Activated CD4-positive, alpha-beta T cell treated with anti-CD3 and anti-CD28 coated beads for 36 hours (primary cell): ENCODE measurements at regions of chr19 and their contacts with region 1.

Region 1: GRCh38 chr19:15418588-15419412 is at the start of gene AKAP8L:
- DNase-seq: peak; percentile 99
- ATAC-seq: peak; percentile 98
- H3K4me3 Mint-ChIP-seq: peak within 1 kb of the TSS; percentile 98
- H3K27ac Mint-ChIP-seq: peak within 1 kb of the TSS; percentile 98
- H3K4me1 Mint-ChIP-seq: peaks cover 37% of the 10 kb centered on the region
- H3K27me3 Mint-ChIP-seq: no peaks in the 10 kb centered on the region
- total RNA-seq, gene AKAP8L: 76.2 to 89.9 TPM

Region 2: DNA sequence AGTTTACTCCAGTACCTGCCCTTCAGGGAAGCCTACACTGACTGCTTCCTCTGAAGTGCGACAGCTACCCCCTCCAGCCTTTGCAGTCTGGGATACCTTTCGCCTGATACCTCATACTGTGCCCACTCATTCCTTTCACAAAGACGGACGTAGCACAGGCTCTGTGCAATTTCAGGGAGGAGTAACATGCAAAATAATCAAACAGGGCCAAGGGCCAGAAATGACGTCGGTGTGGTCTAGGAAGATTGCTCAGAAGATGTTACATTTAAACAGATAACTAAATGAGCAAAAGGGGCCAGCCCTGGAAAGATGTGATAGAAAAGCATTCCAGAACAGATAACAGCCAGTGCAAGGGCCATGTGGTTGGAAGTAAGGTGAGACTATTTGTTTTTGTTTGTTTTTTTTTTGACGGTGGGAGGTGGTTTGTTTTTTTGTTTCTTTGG is 993.1 kb before region 1 on chr19:
- CTCF ChIA-PET with region 1: no interaction called
- POLR2A ChIA-PET with region 1: no interaction called
- intact Hi-C with region 1: no loop called
- DNase-seq: no peak
- ATAC-seq: no peak
- H3K4me3 Mint-ChIP-seq: no peak overlapping the region
- H3K27ac Mint-ChIP-seq: no peak overlapping the region
- H3K4me1 Mint-ChIP-seq: no peaks in the 10 kb centered on the region
- H3K27me3 Mint-ChIP-seq: no peaks in the 10 kb centered on the region

Region 3: GRCh38 chr19:15161028-15161989 is 257.5 kb before region 1 on chr19:
- CTCF ChIA-PET with region 1: no interaction called
- POLR2A ChIA-PET with region 1: no interaction called
- intact Hi-C with region 1: no loop called
- DNase-seq: peak; percentile 22
- ATAC-seq: no peak
- H3K4me3 Mint-ChIP-seq: no peak overlapping the region
- H3K27ac Mint-ChIP-seq: no peak overlapping the region
- H3K4me1 Mint-ChIP-seq: no peaks in the 10 kb centered on the region
- H3K27me3 Mint-ChIP-seq: no peaks in the 10 kb centered on the region

Region 4: DNA sequence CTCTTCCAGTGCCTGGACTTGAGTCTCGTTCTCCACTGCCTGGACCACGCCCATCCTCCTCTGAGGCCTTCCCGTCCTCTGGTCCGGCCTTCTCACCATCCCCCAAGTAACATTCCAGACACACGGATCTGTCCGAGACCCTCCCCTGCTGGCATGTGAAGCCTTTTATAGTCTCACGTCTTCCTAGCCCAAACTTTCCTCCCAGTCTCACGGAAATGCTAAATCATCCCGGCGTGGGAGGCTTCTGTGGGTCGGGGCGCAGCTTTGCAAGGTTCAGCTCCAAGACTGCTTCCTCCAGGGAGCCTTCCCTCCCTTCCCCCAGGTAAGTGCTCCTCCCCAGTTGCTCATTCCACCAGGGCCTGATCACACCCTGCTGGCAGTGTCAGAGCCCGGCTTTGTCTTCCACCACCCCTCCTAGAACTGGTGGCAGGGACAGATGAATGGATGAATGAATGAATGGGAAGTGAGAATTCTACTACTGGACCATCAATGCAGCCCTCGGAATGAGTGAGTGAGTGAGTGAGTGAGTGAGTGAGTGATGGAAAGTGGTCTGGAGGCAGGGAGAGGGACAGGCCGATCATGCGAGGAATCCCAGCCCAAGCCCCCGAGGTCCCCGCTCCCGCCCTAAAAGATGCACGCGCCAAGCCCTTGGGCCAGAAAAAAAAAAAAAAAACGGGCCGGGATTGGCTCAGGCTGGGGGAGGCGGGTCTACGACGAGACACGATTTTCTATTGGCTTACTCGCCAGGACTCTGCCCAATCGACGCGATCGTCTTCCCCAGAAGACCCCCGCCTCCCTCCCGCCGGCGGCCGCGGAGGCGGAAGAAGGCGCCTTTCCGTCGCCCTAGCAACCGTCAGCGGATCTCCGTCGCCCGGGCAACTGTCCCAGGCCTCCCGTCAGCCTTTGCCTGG is 195.8 kb before region 1 on chr19:
- CTCF ChIA-PET with region 1: no interaction called
- POLR2A ChIA-PET with region 1: no interaction called
- intact Hi-C with region 1: loop called in 1 of 2 experiments (anchors 1 kb)
- DNase-seq: peak; percentile 88
- ATAC-seq: peak; percentile 99
- H3K4me3 Mint-ChIP-seq: peak overlapping the region; percentile 71
- H3K27ac Mint-ChIP-seq: no peak overlapping the region
- H3K4me1 Mint-ChIP-seq: peaks cover 15% of the 10 kb centered on the region
- H3K27me3 Mint-ChIP-seq: peaks cover 18% of the 10 kb centered on the region

Region 5: DNA sequence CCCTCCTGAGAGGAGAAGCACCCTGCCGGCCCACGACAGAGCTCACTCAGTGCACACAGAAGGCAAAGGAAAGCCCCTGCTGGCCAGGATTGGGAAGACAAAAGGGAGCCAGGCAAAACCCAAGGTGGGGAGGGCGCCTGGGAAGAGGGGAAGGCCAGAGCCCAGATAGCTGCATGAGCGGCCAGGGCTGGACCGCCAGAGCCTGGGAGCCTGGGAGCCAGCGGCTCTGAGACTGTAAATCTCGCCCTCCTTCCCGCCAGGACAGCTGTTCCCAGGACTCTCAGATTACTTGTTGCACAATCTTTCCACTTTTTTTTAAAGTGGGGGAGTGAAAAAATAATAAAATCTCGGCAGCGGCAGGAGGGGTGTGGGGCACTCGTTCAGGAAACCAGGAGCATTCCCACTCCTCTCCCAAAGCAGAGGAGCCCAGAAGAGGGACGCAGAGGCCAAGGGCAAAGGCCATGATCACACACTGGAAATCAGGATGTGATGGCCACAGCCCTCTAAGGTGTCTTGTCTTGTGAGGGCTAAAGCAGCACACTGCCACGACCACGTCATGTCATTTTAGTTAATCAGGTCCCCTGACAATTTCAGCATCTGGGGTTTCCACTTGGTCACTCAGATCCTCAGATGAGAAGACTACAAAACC is 166.9 kb before region 1 on chr19:
- CTCF ChIA-PET with region 1: no interaction called
- POLR2A ChIA-PET with region 1: no interaction called
- intact Hi-C with region 1: no loop called
- DNase-seq: no peak
- ATAC-seq: no peak
- H3K4me3 Mint-ChIP-seq: no peak overlapping the region
- H3K27ac Mint-ChIP-seq: no peak overlapping the region
- H3K4me1 Mint-ChIP-seq: no peaks in the 10 kb centered on the region
- H3K27me3 Mint-ChIP-seq: no peaks in the 10 kb centered on the region

Region 6: DNA sequence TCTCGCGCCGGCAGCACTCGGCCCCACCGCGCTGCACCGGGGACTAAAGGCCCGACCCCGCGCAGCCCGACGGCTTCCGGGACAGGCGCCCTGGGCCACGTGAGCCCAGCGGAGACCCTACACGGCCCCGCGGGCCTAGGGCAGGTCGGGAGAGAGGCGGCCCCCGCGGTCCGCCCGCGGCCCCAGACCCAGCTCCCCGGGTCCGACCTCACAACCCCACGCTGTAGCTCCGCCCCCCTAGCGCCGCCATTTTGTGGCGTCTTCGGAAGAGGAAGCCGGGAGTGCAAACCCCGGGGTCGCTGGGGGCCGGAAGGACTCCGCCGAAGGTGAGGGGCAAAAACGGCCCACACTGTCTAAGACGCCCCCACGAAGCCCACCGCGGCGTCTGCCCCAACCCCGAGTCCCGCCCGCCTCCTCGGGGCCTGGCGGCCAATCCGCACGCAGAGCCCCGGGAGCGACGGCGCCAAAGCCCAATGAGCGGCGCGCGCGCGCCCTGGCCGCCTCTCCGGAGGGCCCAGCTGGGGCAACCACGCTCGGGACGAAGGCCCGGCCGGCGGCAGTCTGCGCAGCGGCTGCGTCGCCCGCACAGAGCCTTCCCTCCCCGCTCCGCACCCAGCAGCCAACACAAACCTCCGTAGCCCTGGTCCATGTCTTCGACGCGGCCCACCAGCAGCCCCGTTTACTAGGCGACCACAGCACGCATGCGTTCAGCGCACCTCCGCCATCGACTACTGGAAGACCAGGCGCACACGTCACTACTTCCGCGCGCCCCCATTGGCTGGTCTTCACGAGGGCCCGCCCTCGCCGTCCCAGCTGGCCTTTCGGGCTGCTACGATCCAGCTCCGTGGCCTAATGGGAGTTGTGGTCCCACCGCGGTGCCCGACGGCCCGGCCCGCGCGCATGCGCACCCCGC is 39.5 kb before region 1 on chr19 and contains the start of gene AKAP8:
- CTCF ChIA-PET with region 1: interaction called, 22 read pairs
- POLR2A ChIA-PET with region 1: interaction called, 33 read pairs
- intact Hi-C with region 1: loop called (anchors 1 kb)
- DNase-seq: peak; percentile 99
- ATAC-seq: peak; percentile 91
- H3K4me3 Mint-ChIP-seq: peak within 1 kb of the TSS; percentile 88
- H3K27ac Mint-ChIP-seq: peak within 1 kb of the TSS; percentile 100
- H3K4me1 Mint-ChIP-seq: peaks cover 37% of the 10 kb centered on the region
- H3K27me3 Mint-ChIP-seq: no peaks in the 10 kb centered on the region
- total RNA-seq, gene AKAP8: 47.9 to 54.3 TPM

Region 7: GRCh38 chr19:15449620-15450527 is 31.1 kb after region 1 on chr19 and contains the start of gene WIZ:
- CTCF ChIA-PET with region 1: interaction called, 9 read pairs
- POLR2A ChIA-PET with region 1: interaction called, 3 read pairs
- intact Hi-C with region 1: loop called (anchors 1 kb)
- DNase-seq: peak; percentile 90
- ATAC-seq: peak; percentile 68
- H3K4me3 Mint-ChIP-seq: peak within 1 kb of the TSS; percentile 55
- H3K27ac Mint-ChIP-seq: peak within 1 kb of the TSS; percentile 79
- H3K4me1 Mint-ChIP-seq: peaks cover 17% of the 10 kb centered on the region
- H3K27me3 Mint-ChIP-seq: no peaks in the 10 kb centered on the region
- total RNA-seq, gene WIZ: 21.2 to 22.6 TPM

Region 8: DNA sequence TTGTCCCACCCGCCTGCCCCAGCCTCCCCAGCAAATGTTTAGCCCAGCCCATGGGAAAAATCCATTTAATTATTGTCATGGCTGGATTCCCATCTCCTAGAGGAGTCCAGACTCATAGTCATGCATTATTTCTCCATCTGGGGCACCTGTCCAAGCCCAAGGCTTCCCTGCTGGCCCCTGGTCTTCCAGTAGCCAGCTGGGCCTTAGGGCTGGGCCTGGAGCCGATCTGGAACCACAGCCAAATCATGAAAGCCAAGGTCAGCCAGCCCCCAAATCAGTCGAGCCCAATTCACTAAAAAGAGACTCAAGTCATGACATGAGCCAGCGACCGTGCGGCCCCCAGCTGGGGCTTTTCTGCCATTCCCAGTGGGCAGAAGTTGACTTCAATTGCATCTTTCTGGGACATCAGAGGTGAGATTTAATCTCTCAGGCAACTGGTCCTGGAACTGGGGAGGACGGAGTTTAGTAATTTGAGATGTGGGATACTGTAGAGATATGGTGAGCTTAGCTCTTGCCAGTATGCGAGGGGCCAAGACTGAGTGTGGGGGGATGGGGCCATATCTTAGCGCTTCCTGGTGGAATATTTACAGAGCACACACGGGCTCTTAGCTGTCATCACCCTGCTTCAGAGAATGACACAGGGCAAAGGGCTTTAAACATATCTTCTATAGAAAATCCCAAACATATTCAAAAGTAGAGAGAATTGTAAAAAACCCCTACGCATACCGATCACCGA is 69.9 kb after region 1 on chr19:
- CTCF ChIA-PET with region 1: no interaction called
- POLR2A ChIA-PET with region 1: no interaction called
- intact Hi-C with region 1: no loop called
- DNase-seq: no peak
- ATAC-seq: no peak
- H3K4me3 Mint-ChIP-seq: no peak overlapping the region
- H3K27ac Mint-ChIP-seq: no peak overlapping the region
- H3K4me1 Mint-ChIP-seq: peaks cover 5% of the 10 kb centered on the region
- H3K27me3 Mint-ChIP-seq: no peaks in the 10 kb centered on the region

Region 9: DNA sequence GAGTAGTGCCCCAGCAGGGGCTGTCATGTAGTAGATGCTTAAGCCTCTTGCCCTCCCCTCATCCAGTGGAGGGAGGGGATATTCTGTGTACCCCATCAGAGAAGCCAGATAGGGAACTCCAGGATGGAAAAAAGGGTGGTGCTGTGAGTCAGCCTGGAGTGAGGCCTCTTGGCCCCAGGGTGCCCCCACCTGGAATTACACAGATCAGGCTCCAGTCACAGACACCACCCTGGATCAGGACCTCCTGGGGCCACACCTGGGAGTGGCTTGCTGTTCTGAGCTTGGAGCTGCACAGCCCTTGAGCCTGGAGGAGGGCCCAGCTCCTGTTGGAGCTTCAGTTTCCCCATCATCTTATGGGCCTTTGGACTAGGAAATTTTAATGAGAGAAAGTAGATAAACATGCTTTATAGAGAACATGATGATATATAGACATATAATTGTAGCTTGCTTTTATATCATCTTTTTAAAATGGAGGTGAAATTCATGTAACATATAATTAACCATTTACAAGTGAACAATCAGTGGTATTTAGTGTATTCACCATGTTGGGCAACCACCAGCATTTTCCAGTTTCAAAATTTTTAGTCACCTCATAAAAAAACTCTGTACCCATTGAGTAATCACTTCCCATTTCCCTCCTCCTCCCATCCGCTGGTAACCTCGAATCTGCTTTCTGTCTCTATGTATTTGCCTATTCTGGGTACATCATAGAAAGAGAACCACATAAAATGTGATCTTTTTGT is 114.2 kb after region 1 on chr19:
- CTCF ChIA-PET with region 1: interaction called, 3 read pairs
- POLR2A ChIA-PET with region 1: no interaction called
- intact Hi-C with region 1: loop called in 1 of 2 experiments (anchors 1 kb)
- DNase-seq: peak; percentile 46
- ATAC-seq: peak; percentile 86
- H3K4me3 Mint-ChIP-seq: peak overlapping the region; percentile 19
- H3K27ac Mint-ChIP-seq: peak overlapping the region; percentile 57
- H3K4me1 Mint-ChIP-seq: peaks cover 41% of the 10 kb centered on the region
- H3K27me3 Mint-ChIP-seq: no peaks in the 10 kb centered on the region

Region 10: GRCh38 chr19:15562145-15562544 is 143.3 kb after region 1 on chr19:
- CTCF ChIA-PET with region 1: interaction called, 19 read pairs
- POLR2A ChIA-PET with region 1: no interaction called
- intact Hi-C with region 1: no loop called
- DNase-seq: no peak
- ATAC-seq: no peak
- H3K4me3 Mint-ChIP-seq: no peak overlapping the region
- H3K27ac Mint-ChIP-seq: no peak overlapping the region
- H3K4me1 Mint-ChIP-seq: no peaks in the 10 kb centered on the region
- H3K27me3 Mint-ChIP-seq: peaks cover 10% of the 10 kb centered on the region